Panc1 (cell line): ENCODE measurements at regions of chr3 and their contacts with region 1.

Region 1: GRCh38 chr3:115217678-115218451 is 70.8 kb upstream of the ZBTB20 start:
- DNase-seq: peak; percentile 17
- ATAC-seq: peak; percentile 71; the same call in 1 of the 2 replicates
- H3K4me3 ChIP-seq: no peak overlapping the region
- H3K27ac ChIP-seq: no peak overlapping the region
- H3K4me1 ChIP-seq: no peaks in the 10 kb centered on the region
- H3K27me3 ChIP-seq: no peaks in the 10 kb centered on the region
- CTCF ChIP-seq: peak; percentile 65

Region 2: GRCh38 chr3:114863848-114864247 is 354.0 kb before region 1 on chr3:
- CTCF ChIA-PET with region 1: no interaction called
- POLR2A ChIA-PET with region 1: no interaction called
- in situ Hi-C with region 1: no loop called
- intact Hi-C with region 1: no loop called
- DNase-seq: no peak
- ATAC-seq: no peak
- H3K4me3 ChIP-seq: no peak overlapping the region
- H3K27ac ChIP-seq: no peak overlapping the region
- H3K4me1 ChIP-seq: no peaks in the 10 kb centered on the region
- H3K27me3 ChIP-seq: no peaks in the 10 kb centered on the region
- CTCF ChIP-seq: no peak

Region 3: DNA sequence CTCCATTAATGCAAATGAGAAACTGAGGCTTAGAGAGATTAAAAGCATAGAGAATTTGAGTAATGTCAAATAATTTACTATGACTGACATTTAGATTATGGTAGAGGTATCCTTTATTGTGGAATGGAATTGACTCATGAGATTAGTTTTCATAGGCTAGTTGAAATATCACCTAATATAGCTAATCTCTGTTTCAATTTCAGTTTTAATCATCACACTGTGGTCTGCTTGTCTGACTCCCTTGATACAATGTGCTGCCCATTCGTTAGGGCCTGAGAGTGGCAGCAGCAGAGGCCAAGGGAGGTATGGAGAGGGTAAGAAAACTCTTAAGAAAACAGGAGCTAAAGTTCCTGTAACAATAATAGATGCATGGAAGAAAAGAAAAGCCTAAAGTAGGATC is 57.6 kb before region 1 on chr3:
- CTCF ChIA-PET with region 1: no interaction called
- POLR2A ChIA-PET with region 1: no interaction called
- in situ Hi-C with region 1: no loop called
- intact Hi-C with region 1: no loop called
- DNase-seq: no peak
- ATAC-seq: no peak
- H3K4me3 ChIP-seq: no peak overlapping the region
- H3K27ac ChIP-seq: no peak overlapping the region
- H3K4me1 ChIP-seq: no peaks in the 10 kb centered on the region
- H3K27me3 ChIP-seq: no peaks in the 10 kb centered on the region
- CTCF ChIP-seq: no peak

Region 4: GRCh38 chr3:115692887-115693524 is 475.1 kb after region 1 on chr3:
- CTCF ChIA-PET with region 1: no interaction called
- POLR2A ChIA-PET with region 1: no interaction called
- in situ Hi-C with region 1: no loop called
- intact Hi-C with region 1: loop called (anchors 2 kb)
- DNase-seq: peak; percentile 59
- ATAC-seq: peak; percentile 97
- H3K4me3 ChIP-seq: no peak overlapping the region
- H3K27ac ChIP-seq: no peak overlapping the region
- H3K4me1 ChIP-seq: no peaks in the 10 kb centered on the region
- H3K27me3 ChIP-seq: no peaks in the 10 kb centered on the region
- CTCF ChIP-seq: peak; percentile 90

Region 5: DNA sequence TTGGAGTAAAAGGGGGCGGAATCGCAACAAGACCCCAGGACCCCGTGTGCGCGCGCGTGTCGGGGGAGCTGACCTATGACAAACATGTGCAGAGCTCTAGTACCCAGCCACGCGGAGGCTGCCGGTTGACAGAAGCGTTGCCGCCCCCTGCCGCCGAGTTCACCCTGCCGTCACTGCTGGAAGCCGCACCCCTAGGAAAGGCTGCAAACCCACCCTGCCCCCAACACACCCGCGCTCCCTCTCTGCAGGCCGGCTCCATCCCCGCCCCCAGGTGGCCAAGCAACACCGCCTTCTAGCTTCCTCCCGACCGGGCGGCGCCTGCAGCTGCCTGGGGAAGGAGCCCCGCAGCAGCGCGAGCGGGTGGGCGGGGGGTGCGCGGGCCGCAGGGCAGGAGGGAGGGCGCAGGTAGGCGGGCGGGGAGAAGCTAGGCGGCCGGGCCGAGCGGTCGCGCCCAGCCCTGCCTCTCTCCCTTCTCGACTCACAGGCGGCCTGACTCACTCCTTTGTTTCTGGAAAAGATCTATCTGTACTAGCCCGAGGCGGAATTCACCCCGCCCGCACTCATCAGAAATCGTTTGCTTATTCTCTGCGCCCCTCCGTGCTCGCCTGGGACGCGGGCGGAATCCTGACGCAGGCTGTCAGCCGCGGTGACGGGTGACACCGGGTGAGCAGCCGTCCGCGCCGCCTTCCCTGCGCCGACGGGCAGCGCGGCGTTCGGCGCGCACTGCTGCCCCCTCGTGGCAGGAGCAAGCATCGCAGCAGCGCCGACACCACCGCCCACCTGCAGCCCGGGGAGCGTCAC is 566.3 kb after region 1 on chr3:
- CTCF ChIA-PET with region 1: interaction called, 3 read pairs
- POLR2A ChIA-PET with region 1: no interaction called
- in situ Hi-C with region 1: no loop called
- intact Hi-C with region 1: loop called (anchors 10 kb)
- DNase-seq: no peak
- ATAC-seq: peak; percentile 95
- H3K4me3 ChIP-seq: peak overlapping the region; percentile 47 to 62
- H3K27ac ChIP-seq: no peak overlapping the region
- H3K4me1 ChIP-seq: 0 out of 2 replicates have a peak, but pooled peaks cover 4% of the 10 kb centered on the region
- H3K27me3 ChIP-seq: no peaks in the 10 kb centered on the region
- CTCF ChIP-seq: peak; percentile 99

Region 6: DNA sequence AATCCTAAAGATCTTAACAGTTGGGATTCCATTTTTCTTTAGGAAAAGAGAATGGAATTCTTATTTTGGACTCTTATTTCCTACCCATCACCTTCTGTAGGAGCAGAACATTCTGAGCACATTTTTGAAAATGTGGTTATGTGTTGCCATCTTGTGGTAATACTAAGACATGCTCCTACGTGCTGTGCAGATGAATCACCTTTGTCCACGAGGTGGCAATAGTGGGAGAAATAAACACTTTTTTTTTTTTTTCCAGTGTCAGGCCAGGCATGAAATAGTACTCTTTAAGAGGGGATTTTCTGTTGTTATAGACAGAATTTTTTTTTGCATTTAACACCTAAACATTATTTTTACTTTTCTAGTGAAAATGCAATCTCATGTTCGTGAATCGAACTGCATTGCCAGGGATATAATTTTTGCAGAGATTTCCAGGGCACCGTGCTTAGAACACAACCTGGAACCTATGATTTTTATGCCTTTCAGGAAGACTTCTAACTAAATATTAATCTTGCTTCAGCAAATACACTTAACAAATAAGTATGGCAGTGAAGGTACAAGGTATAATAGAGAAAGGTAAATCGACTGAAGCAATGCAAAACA is 602.0 kb after region 1 on chr3:
- CTCF ChIA-PET with region 1: no interaction called
- POLR2A ChIA-PET with region 1: no interaction called
- in situ Hi-C with region 1: no loop called
- intact Hi-C with region 1: loop called (anchors 10 kb)
- DNase-seq: peak; percentile 83
- ATAC-seq: peak; percentile 93
- H3K4me3 ChIP-seq: no peak overlapping the region
- H3K27ac ChIP-seq: no peak overlapping the region
- H3K4me1 ChIP-seq: no peaks in the 10 kb centered on the region
- H3K27me3 ChIP-seq: no peaks in the 10 kb centered on the region
- CTCF ChIP-seq: peak; percentile 93; the same call in 1 of the 2 replicates